Activated T-helper 1 cell treated with anti-CD3 and anti-CD28 coated beads, Interleukin-12 subunit alpha, Interleukin-12 subunit beta, Interleukin-2, Interleukin-4 antibody, amounts not matched to agents 30 ng/mL and 10 ng/mL and 1 ng/mL, durations not matched to agents 14 hours and 24 hours and 36 hours (primary cell): ENCODE measurements at regions of chr4 and their contacts with region 1.

Region 1: DNA sequence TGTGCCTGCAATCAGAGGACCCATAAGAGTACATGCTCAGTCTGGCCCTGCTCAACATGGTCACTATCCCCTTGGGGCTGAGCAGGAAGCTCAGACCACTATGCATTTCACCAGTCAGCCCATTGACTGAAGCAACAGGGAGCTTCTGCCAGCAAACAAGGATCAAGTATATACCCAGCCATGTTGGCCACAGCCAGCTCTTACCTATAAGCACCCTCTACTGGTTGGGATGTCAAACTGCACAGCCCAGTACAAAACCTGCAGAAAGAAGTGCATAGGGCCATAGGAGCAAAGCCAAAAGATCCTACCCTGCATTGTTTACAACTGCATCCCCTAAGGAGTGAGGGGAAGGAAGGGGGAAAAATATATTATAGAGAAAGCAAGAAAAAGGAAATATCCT is 214.4 kb upstream of the CPEB2 start:
- DNase-seq: no peak
- H3K4me3 Mint-ChIP-seq: no peak overlapping the region
- H3K27ac Mint-ChIP-seq: no peak overlapping the region
- H3K4me1 Mint-ChIP-seq: peaks cover 49% of the 10 kb centered on the region
- H3K27me3 Mint-ChIP-seq: no peaks in the 10 kb centered on the region

Region 2: DNA sequence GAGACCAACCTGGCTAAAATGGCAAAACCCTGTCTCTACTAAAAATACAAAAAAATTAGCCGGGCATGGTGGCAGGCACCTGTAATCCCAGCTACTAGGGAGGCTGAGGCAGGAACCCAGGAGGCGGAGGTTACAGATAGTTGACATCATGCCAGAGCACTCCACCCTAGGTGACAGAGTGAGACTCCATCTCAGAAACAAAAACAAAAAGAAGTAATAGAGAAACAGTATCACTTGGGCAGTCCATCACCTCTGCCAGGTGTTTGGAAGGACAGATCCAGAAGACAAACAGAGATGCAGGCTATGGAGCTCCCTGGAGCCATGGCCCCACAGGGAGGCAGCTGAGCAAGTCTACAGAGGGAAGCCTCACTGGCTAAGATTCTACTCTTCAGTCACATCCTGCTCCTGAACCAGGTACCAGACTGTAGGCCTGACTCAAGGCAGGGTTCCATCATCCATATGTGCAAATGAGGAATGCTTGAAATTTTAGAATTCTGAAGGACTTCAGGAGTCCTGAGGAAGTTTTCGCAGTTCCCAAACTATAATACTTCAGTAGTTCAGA is 132.9 kb after region 1 on chr4:
- intact Hi-C with region 1: loop called (anchors 2 kb)
- DNase-seq: no peak
- H3K4me3 Mint-ChIP-seq: no peak overlapping the region
- H3K27ac Mint-ChIP-seq: no peak overlapping the region
- H3K4me1 Mint-ChIP-seq: no peaks in the 10 kb centered on the region
- H3K27me3 Mint-ChIP-seq: no peaks in the 10 kb centered on the region

Region 3: DNA sequence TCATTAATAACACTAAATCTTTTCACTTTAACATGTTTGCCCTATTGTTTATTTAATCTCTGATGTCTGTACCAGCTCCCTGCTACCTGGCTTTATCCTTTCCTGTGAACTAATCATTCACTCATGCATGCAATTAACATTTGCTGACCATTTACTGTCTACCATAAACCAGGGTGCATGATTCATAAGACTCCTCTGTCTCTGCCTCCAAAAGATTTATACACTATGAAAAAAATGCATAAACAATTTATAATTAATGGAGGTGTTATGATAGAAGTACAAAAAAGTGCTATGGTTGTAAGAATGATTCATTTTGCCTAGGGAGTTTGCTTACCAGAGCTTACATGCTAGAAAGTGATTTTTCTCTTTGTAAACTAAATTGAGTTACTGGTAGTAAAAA is 189.9 kb after region 1 on chr4:
- intact Hi-C with region 1: no loop called
- DNase-seq: no peak
- H3K4me3 Mint-ChIP-seq: no peak overlapping the region
- H3K27ac Mint-ChIP-seq: no peak overlapping the region
- H3K4me1 Mint-ChIP-seq: no peaks in the 10 kb centered on the region
- H3K27me3 Mint-ChIP-seq: peaks cover 7% of the 10 kb centered on the region